ENCODE measurements at regions of chr20 and their contacts with region 1.

Region 1: GRCh38 chr20:18224968-18225568 is 63.3 kb upstream of the ZNF133 start:
- DNase-seq: peak; percentile 68 to 77
- H3K4me3 ChIP-seq: peak overlapping the region; percentile 33; the same call in 1 of the 2 replicates
- H3K27ac ChIP-seq: peak overlapping the region; percentile 49
- H3K4me1 ChIP-seq: peaks cover 37% of the 10 kb centered on the region
- H3K27me3 ChIP-seq: no peaks in the 10 kb centered on the region
- CTCF ChIP-seq: no peak

Region 2: GRCh38 chr20:17976305-17976704 is 248.8 kb before region 1 on chr20:
- CTCF ChIA-PET with region 1: interaction called, 12 read pairs
- POLR2A ChIA-PET with region 1: no interaction called
- intact Hi-C with region 1: no loop called
- DNase-seq: no peak
- H3K4me3 ChIP-seq: no peak overlapping the region
- H3K27ac ChIP-seq: no peak overlapping the region
- H3K4me1 ChIP-seq: peaks cover 25% of the 10 kb centered on the region
- H3K27me3 ChIP-seq: no peaks in the 10 kb centered on the region
- CTCF ChIP-seq: no peak

Region 3: GRCh38 chr20:18304585-18304984 is 79.5 kb after region 1 on chr20:
- CTCF ChIA-PET with region 1: no interaction called
- POLR2A ChIA-PET with region 1: no interaction called
- intact Hi-C with region 1: no loop called
- DNase-seq: no peak
- H3K4me3 ChIP-seq: no peak overlapping the region
- H3K27ac ChIP-seq: no peak overlapping the region
- H3K4me1 ChIP-seq: no peaks in the 10 kb centered on the region
- H3K27me3 ChIP-seq: no peaks in the 10 kb centered on the region
- CTCF ChIP-seq: peak; percentile 45; the same call in 1 of the 2 replicates

Region 4: GRCh38 chr20:18481596-18481995 is 256.5 kb after region 1 on chr20:
- CTCF ChIA-PET with region 1: no interaction called
- POLR2A ChIA-PET with region 1: no interaction called
- intact Hi-C with region 1: no loop called
- DNase-seq: no peak
- H3K4me3 ChIP-seq: no peak overlapping the region
- H3K27ac ChIP-seq: no peak overlapping the region
- H3K4me1 ChIP-seq: no peaks in the 10 kb centered on the region
- H3K27me3 ChIP-seq: no peaks in the 10 kb centered on the region
- CTCF ChIP-seq: no peak

Measured in PC-9 (cell line).